CD8-positive, alpha-beta T cell (primary cell): ENCODE measurements at regions of chr21 and their contacts with region 1.

Region 1: DNA sequence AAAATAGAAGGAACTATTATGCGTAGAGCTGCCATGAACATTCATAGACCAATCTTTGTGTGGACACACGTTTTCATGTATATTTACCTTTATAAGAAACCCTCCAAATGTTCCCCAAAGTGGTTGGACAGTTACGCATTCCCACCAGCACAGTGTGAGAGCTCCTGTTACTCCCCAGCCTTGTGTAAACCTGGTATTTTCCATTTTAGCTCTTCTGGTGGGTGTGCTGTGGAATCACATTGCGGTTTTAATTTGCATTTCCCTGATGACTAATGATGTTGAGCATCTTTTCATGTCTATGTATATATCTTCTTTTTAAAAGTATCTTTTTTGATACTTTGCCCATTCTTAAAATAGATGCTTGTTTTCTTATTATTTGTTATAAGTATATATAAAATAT is 3.2 kb upstream of the UBASH3A start:
- DNase-seq: peak in 1 of 9 experiments; percentile 60
- ATAC-seq: no peak
- H3K4me3 ChIP-seq: no peak overlapping the region
- H3K4me3 Mint-ChIP-seq: no peak overlapping the region
- H3K27ac ChIP-seq: no peak overlapping the region
- H3K27ac Mint-ChIP-seq: no peak overlapping the region
- H3K4me1 ChIP-seq: peaks cover 39% of the 10 kb centered on the region
- H3K4me1 Mint-ChIP-seq: peaks cover 57% of the 10 kb centered on the region
- H3K27me3 ChIP-seq: no peaks in the 10 kb centered on the region
- H3K27me3 Mint-ChIP-seq: no peaks in the 10 kb centered on the region
- CTCF ChIP-seq: no peak

Region 2: GRCh38 chr21:41360072-41360821 is 1040.3 kb before region 1 on chr21:
- CTCF ChIA-PET with region 1: no interaction called
- POLR2A ChIA-PET with region 1: no interaction called
- intact Hi-C with region 1: no loop called
- DNase-seq: peak in 1 of 9 experiments; percentile 47
- ATAC-seq: no peak
- H3K4me3 ChIP-seq: no peak overlapping the region
- H3K4me3 Mint-ChIP-seq: peak overlapping the region; percentile 89
- H3K27ac ChIP-seq: peak overlapping the region in 1 of 2 experiments; percentile 3
- H3K27ac Mint-ChIP-seq: peak overlapping the region; percentile 100
- H3K4me1 ChIP-seq: peaks cover 24% of the 10 kb centered on the region
- H3K4me1 Mint-ChIP-seq: peaks cover 42% of the 10 kb centered on the region
- H3K27me3 ChIP-seq: no peaks in the 10 kb centered on the region
- H3K27me3 Mint-ChIP-seq: no peaks in the 10 kb centered on the region
- CTCF ChIP-seq: no peak

Region 3: GRCh38 chr21:42117229-42117966 is 283.1 kb before region 1 on chr21:
- CTCF ChIA-PET with region 1: no interaction called
- POLR2A ChIA-PET with region 1: no interaction called
- intact Hi-C with region 1: no loop called
- DNase-seq: peak; percentile 52 to 87 (median 77)
- ATAC-seq: peak; percentile 96
- H3K4me3 ChIP-seq: no peak overlapping the region
- H3K4me3 Mint-ChIP-seq: no peak overlapping the region
- H3K27ac ChIP-seq: no peak overlapping the region
- H3K27ac Mint-ChIP-seq: no peak overlapping the region
- H3K4me1 ChIP-seq: peaks cover 19% of the 10 kb centered on the region
- H3K4me1 Mint-ChIP-seq: peaks cover 19% of the 10 kb centered on the region
- H3K27me3 ChIP-seq: peaks cover 3 to 12% of the 10 kb centered on the region in 2 experiments
- H3K27me3 Mint-ChIP-seq: peaks cover 44% of the 10 kb centered on the region
- CTCF ChIP-seq: peak; percentile 96

Region 4: DNA sequence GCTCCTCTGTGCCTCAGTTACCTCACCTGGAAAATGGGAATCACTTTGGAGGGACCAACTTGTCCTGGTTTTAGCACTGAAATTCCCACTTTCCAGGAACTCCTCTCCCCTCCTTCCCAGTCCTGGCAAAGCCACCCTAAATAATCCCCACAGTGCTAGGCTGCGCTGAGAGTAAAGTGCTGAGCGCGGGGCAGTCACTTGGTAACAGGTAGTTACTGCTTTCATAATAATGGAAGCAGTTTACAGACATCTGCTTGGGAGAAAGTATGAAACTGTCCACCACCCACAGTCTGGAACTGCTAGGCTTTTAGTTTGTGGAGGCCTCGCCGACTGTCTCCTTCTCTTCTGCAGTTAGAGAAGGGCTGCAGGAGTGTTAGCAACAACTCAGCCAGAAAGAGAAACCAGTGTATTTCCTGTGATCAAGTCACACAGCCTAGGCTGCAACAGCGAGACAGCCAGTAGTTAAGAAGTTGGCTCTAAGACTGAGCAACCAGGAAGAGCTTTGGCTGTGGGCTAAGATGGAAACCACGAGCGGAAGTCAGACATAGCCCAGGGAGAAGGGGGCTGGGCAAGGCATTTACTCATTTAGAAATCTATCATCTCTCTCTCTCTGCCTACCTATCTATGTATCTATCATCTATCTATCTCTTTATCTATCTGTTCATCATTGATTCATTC is 212.4 kb before region 1 on chr21:
- CTCF ChIA-PET with region 1: no interaction called
- POLR2A ChIA-PET with region 1: no interaction called
- intact Hi-C with region 1: no loop called
- DNase-seq: peak; percentile 58 to 95 (median 80)
- ATAC-seq: peak; percentile 85
- H3K4me3 ChIP-seq: peak overlapping the region; percentile 11 to 22
- H3K4me3 Mint-ChIP-seq: peak overlapping the region; percentile 74
- H3K27ac ChIP-seq: peak overlapping the region; percentile 63 to 85
- H3K27ac Mint-ChIP-seq: peak overlapping the region; percentile 97
- H3K4me1 ChIP-seq: peaks cover 86% of the 10 kb centered on the region
- H3K4me1 Mint-ChIP-seq: peaks cover 77% of the 10 kb centered on the region
- H3K27me3 ChIP-seq: no peaks in the 10 kb centered on the region
- H3K27me3 Mint-ChIP-seq: no peaks in the 10 kb centered on the region
- CTCF ChIP-seq: no peak

Region 5: DNA sequence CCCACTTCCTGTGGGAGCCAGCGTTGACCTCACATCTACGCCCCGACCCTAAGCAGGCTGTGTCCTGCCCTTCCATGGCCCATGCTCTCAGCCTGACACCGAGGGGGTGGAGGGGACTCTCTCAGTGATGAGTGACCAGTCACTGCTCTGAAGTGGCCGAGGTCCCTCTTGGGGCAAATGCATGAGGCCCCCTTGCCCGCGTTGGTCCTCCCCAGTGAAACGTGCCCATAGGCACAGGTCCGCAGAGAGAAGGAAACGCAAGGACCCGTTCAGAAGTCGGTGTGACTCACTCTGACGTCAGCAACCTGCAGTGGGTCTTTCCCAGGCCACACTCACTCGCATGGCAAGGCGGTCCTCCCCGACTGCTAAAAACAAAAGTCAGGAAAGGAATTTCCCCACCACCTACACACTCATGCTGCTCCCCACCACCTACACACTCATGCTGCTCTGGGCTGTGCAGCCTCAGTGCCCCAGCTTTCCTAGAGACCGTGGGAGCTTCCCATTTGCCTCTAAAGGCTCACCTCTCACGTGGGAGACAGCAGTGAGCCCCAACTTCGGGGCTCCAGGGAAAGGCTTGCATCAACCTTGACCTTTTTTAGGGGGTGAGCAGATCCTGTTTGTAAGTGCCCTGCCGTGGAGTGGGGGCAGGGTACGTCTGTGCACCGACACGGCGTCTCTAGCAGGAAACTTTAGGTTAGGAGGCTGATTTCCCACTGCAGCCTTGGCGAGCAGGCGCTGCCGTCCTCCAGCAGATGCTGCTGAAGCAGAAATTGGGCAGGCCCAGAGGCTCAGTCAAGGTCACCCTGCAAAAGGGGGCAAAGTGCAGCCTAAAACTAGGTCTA is 14.6 kb after region 1 on chr21:
- CTCF ChIA-PET with region 1: interaction called, 8 read pairs
- POLR2A ChIA-PET with region 1: interaction called, 155 read pairs
- intact Hi-C with region 1: loop called in 1 of 2 experiments (anchors 1 kb)
- DNase-seq: peak; percentile 66 to 98 (median 89)
- ATAC-seq: peak; percentile 91
- H3K4me3 ChIP-seq: peak overlapping the region; percentile 0 to 29
- H3K4me3 Mint-ChIP-seq: peak overlapping the region; percentile 74
- H3K27ac ChIP-seq: peak overlapping the region; percentile 63 to 82
- H3K27ac Mint-ChIP-seq: peak overlapping the region; percentile 99
- H3K4me1 ChIP-seq: peaks cover 77% of the 10 kb centered on the region
- H3K4me1 Mint-ChIP-seq: peaks cover 61% of the 10 kb centered on the region
- H3K27me3 ChIP-seq: peaks cover 0 to 2% of the 10 kb centered on the region in 2 experiments
- H3K27me3 Mint-ChIP-seq: no peaks in the 10 kb centered on the region
- CTCF ChIP-seq: no peak

Region 6: GRCh38 chr21:42440187-42440792 is 39.8 kb after region 1 on chr21:
- CTCF ChIA-PET with region 1: interaction called, 3 read pairs
- POLR2A ChIA-PET with region 1: interaction called, 3 read pairs
- intact Hi-C with region 1: loop called in 1 of 2 experiments (anchors 5 kb)
- DNase-seq: peak in 1 of 9 experiments; percentile 31
- ATAC-seq: no peak
- H3K4me3 ChIP-seq: no peak overlapping the region
- H3K4me3 Mint-ChIP-seq: no peak overlapping the region
- H3K27ac ChIP-seq: peak overlapping the region in 1 of 2 experiments; percentile 51
- H3K27ac Mint-ChIP-seq: peak overlapping the region; percentile 84
- H3K4me1 ChIP-seq: peaks cover 26% of the 10 kb centered on the region
- H3K4me1 Mint-ChIP-seq: peaks cover 47% of the 10 kb centered on the region
- H3K27me3 ChIP-seq: peaks cover 0 to 4% of the 10 kb centered on the region in 2 experiments
- H3K27me3 Mint-ChIP-seq: no peaks in the 10 kb centered on the region
- CTCF ChIP-seq: no peak